Right ventricle myocardium superior (tissue), 1 donor: ENCODE measurements at regions of chr1 and their contacts with region 1.

Region 1: DNA sequence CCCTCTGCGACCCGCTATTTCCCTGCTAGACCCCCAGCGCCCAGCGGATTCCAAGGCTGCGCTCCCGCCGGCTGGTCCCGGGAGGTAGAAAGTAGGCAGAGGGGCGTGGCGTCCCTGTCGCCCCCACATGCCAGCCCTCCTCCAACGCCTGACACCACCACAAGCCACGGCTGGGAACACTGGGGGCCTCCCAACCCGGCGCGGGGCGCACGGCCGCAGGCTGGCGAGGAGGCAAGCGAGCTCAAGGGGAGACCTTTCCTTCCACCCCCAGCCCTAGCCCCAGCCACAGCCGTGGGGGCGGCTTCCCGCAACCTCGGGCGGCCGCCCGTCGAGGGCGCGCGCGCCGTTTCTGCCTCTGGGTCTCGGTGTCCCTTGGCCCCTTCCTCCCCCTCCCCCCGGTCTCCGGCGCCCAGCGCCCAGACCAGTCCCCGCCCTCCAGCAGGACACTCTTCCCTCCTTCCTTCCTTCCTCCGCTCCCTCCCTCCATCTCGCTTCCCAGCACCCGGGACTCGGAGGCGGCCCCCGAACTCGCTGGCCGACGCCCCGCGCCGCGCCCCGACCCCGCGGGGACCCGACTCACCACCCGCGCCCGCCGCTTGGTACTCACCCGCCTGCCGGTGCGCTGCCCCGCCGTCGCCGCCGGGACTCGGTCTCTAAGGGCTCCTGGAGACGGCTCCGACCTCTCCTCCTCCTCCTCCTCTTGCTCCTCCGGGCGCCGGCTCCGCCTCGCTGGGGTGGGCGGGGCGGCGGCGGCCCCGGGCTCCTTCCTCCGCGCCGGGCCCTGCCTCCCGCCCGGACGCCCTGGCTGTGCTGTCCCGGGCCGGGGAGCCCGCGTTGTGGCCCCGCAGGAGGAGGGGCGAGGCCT is at the start of gene GNG12:
- DNase-seq: peak; percentile 81
- ATAC-seq: peak; percentile 91
- total RNA-seq, gene GNG12: 31.9 TPM

Region 2: GRCh38 chr1:67535474-67535873 is 297.5 kb before region 1 on chr1:
- intact Hi-C with region 1: loop called (anchors 10 kb)
- DNase-seq: peak; percentile 81
- ATAC-seq: peak; percentile 84

Region 3: DNA sequence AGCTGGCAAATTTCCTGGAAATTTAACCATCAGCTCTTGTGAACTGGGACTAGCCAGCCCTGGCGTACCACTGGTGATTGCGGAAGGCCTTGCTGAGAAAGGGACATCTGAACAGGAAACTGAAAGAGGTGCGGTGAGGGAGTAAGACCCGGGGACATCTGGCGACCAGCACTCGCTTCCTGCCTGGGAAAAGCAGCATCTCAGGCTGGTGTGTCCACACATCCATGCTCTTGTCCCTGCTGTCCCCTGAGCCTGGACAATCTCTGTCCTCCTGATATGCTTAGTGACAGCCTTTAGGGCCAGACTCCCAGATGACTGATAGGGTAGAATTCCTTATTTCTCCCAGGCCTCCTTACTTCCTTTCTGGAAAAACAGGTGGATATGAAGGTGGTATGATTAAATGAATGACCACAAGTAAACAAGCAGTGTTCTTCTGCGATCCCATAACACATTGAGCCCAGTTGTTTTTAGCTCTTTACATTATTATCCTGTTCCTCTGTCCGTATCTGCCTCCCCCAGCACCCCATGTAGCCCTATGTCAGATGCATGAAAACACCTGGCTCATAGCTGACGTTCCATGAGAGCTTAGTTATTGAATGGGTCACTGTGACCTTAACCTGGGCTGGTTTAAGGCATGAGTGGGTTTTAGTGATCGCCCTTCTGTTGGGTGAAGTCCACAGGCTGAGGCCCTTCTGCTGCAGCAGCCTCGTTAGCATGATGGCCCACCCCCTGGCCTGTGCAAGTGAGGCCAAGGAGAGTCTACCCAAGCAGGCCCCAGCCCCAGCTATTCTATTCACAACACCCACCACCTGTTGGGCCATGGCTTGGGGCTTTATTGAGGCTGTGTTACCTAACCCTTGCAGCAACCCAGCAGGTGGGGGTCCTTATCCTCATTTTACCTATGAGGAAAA is 224.1 kb before region 1 on chr1:
- intact Hi-C with region 1: no loop called
- DNase-seq: no peak
- ATAC-seq: no peak

Region 4: GRCh38 chr1:67766141-67766978 is 66.6 kb before region 1 on chr1:
- intact Hi-C with region 1: loop called (anchors 5 kb)
- DNase-seq: peak; percentile 46
- ATAC-seq: peak; percentile 80

Region 5: DNA sequence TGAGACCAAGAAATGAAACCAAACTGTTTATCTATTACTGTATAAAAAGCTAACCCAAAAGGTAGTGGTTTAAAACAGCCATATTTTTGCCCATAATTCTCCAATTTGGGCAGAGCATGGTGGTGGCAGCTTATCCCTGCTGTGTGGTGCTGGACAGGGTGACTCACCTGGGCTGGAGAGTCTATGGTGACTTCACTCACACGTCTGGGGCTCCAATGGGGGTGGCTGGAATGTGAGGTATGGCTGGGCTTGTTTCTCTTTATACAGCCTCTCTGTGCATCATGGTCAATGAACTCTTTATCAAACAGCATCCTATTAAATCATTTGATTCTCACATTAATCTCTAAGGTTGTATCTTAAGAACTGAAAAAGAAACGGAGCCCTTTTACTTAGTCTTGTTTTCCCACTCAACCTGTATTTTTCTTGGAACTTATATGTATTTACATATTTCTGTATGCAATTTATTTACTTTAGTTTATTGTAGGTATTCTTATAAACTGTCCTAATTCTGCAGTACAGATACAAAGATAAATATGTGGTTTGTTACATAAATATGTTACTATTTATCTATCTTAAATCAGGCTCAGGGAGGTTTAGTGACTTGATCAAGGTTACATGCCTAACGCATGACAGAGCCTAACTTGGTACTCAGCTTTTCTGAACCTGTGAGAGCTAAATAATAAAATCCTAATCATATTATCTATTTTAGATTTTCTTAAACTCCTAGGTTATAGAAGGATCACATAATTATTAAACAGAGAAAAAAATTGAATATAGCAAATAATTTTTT is 436.9 kb after region 1 on chr1:
- intact Hi-C with region 1: no loop called
- DNase-seq: no peak
- ATAC-seq: no peak